Sciatic nerve (tissue), 2 donors: ENCODE measurements at regions of chr3 and their contacts with region 1.

Region 1: GRCh38 chr3:102229062-102229655 is 205.7 kb upstream of the ZPLD1 start:
- DNase-seq: peak; percentile 80
- ATAC-seq: peak; percentile 73

Region 2: GRCh38 chr3:102206511-102207031 is 22.6 kb before region 1 on chr3:
- intact Hi-C with region 1: no loop called
- DNase-seq: peak; percentile 81
- ATAC-seq: peak; percentile 96

Region 3: DNA sequence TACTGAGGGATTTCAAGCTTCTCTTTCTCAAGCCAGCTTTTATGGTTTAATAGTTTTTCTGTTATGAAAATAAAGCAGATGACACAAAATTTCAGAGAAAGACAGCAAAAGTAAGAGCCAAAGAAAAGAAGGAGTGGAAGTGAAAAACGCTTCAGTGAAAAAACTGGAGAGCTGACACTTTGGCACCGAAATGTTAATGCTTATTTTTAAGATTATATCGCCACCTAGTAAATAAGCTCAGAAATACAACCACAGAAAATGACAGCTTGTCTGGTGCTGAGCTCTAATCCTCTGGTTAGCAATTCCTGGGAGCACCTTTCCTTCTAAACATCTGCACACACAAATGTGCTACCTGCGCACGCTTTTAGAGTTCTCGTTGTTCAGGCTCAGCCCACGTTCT is 307.3 kb after region 1 on chr3:
- intact Hi-C with region 1: loop called (anchors 5 kb)
- DNase-seq: no peak
- ATAC-seq: peak; percentile 56